Astrocyte of the cerebellum (primary cell): ENCODE measurements at regions of chr4 and their contacts with region 1.

Region 1: GRCh38 chr4:4869731-4870571 is 10.5 kb downstream of the MSX1 start:
- DNase-seq: no peak
- H3K4me3 ChIP-seq: no peak overlapping the region
- CTCF ChIP-seq: no peak

Region 2: DNA sequence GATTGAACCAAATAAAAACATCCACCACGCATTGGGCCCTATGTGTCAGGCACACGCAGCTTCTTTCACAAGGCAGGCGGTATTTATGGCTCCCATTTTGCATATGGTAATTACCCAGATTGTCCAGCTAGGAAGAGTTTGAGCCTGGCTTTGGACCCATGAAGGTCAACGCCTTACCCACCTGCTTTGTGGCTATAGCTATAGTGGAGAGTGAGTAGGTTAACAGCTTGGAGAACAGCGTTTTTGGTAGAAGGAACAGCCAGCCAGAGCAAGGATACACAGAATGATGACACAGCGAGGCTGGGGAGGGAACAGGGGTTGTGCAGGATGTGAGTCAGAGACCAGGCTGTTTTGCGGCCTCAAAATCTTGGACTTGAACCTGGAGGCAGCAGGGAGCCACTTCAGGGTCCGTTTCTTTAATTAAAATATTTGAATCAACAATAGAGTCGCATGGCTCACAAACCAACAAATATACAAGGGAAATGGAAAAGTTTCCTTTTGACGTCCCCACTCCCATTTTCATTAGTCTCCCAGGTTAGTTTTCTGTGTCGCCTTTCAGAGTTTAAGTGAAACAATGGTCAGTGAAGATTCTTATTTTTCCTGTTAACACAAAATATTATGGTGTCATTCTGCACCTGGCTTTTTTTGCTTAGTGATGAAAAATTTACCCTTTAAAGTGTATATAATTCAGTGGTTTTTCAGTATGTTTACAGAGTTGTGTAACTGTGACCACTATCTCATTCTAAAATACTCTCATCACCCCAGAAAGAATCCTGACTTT is 209.9 kb before region 1 on chr4:
- in situ Hi-C with region 1: loop called (anchors 10 kb)
- DNase-seq: peak; percentile 97
- H3K4me3 ChIP-seq: no peak overlapping the region
- CTCF ChIP-seq: no peak

Region 3: DNA sequence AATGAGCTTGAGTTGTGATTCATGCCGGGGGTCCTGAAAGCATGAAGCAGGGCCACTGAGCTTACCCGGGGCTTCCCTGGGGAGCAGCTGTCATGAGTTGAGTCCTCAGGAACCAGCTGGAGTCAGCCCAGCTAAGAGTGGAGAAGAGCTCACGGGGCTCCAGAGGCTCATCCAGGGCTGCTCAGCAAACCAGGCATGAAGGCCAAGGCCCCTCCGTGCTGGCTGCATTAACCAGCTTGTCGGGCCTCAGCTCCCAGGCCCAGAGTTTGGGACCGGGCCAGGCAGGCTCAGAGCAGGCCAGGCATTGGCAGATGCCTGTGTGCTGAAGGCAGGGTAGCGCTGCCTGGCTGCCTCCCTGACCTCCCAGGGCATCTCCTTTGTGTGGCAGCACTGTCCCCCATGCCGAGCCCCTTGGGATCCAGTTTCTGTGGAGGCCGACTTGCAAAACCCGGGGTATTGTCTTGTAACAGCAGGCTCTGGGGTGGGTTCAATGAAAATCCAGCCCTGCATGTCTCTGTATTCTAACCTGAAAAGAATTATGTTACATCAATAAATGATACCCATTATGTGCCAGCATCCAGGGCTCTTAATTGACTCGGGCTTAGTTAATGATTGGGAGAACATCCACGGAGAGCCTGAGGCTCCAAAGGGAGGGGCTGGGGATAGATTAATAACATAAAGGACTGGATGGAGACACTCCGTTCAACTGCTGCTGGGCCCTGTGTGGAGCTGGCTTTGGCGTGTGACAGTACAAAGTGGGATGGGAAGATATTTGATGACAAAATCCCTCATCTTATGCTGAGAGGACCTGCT is 78.4 kb before region 1 on chr4:
- in situ Hi-C with region 1: no loop called
- DNase-seq: no peak
- H3K4me3 ChIP-seq: no peak overlapping the region
- CTCF ChIP-seq: no peak

Region 4: DNA sequence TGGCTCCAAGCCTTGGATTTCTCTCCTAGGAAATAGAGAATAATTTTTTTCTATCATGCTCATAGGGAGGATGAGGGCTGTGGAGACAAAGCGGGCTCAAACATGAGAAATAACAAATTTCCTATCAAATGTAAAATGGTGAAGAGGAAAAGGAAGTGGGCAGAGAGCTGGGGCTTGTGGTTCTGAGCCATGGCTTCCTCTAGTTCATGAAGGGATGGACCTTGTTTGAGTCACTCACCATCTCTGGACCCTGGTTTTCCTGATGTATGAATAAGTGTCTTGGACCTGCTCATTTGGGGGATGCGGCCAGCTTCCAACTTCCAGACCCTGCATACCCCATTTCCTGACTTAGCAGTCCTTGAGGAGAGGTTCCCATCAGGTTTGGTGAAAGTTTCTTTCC is 52.5 kb after region 1 on chr4:
- in situ Hi-C with region 1: no loop called
- DNase-seq: no peak
- H3K4me3 ChIP-seq: no peak overlapping the region
- CTCF ChIP-seq: no peak

Region 5: DNA sequence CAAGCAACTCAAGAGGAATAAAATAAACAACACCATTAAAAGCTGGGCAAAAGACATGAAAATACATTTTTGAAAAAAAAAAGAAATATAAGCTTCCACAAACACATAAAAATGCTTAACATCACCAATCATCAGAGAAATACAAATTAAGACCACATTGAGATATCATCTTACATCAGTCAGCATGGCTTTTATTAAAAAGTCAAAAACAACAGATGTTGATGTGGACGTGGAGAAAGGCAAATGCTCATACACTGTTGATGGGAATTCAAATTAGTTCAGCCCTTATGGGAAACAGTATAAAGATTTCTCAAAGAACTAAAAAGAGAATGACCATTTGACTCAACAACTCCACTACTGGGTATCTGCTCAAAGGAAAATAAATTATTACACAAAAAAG is 240.9 kb after region 1 on chr4:
- in situ Hi-C with region 1: no loop called
- DNase-seq: no peak
- H3K4me3 ChIP-seq: no peak overlapping the region
- CTCF ChIP-seq: no peak